Adrenal gland (tissue), 19 donors: ENCODE measurements at regions of chr15 and their contacts with region 1.

Region 1: GRCh38 chr15:99708556-99708955 is 24.7 kb downstream of the LYSMD4 start:
- DNase-seq: peak; percentile 64 to 93 (median 90)
- H3K4me3 ChIP-seq: peak overlapping the region in 1 of 4 donors; percentile 7
- H3K27ac ChIP-seq: peak overlapping the region in 3 of 5 donors; percentile 28 to 49 (median 43)
- H3K4me1 ChIP-seq: peaks cover 11 to 25% of the 10 kb centered on the region in 2 donors
- H3K27me3 ChIP-seq: no peaks in the 10 kb centered on the region
- CTCF ChIP-seq: no peak
- POLR2A ChIP-seq: peak in 1 of 2 donors; percentile 54

Region 2: DNA sequence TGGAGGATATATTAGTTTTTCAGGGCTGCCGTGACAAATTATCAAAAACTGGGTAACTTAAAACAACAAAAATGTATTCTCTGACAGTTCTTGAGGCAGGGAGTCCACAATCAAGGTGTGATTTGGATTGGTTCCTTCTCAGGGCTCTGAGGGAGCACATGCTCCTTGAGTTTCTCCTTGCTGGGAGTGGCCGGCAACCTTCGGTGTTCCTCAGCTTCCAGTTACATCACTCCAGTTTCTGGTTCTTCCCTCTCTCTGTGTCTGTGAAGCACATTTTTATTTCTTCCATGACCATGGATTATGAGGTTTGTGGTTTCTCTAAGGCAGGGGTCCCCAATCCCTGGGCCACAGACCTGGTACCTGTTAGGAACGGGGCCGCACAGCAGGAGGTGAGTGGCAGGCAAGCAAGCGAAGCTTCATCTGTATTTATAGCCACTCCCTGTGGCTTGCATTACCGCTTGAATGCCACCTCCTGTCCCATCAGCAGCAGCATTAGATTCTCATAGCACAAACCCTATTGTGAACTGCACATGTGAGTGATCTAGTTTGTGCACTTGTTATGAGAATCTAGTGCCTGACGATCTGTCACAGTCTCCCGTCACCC is 432.9 kb before region 1 on chr15:
- intact Hi-C with region 1: loop called in 1 of 2 experiments (anchors 5 kb)
- DNase-seq: no peak
- H3K4me3 ChIP-seq: no peak overlapping the region
- H3K27ac ChIP-seq: no peak overlapping the region
- H3K4me1 ChIP-seq: no peaks in the 10 kb centered on the region
- H3K27me3 ChIP-seq: no peaks in the 10 kb centered on the region
- CTCF ChIP-seq: no peak
- POLR2A ChIP-seq: no peak

Region 3: DNA sequence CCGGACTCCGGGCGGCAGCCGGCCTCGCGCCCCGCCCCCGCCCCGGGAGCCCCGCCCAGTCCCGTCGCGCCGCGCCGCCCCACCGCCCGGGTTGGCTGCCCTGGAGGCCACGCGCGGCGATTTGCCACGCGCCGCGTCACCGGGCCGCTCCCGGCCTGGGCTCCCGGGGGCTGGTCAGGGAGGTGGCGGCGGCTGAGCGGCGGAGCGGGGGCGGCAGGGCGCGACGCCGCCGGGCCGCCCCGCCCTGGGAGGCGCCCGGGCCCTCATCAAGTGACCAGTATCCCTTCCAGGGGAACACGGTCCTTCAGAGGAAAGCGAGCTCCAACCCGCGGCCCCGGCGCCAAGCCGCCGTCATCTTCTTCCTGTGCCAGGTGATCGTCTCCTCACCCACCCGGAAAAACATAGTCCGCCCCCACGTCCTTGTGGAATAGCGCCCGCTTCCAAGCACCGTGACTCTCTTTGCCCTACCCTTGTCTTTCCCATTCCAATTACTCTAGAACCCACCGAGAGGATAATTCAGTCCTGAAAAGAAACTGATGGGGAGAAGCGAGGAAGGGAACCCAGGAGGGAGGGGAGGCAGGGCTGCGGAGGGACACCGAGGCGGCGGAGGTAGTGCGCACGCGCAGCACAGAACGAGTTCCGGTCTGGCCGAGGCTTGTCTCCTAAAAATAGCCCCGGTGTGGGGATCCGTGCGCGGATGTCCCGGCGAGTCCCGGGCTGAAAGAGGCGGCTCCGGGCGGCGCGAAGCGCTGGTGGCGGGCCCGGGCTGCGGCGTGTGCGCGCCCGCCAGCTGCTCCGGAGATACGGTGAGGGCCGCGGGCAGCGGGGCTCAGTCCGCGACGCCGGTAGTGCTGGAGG is 143.0 kb before region 1 on chr15 and contains the start of gene MEF2A:
- intact Hi-C with region 1: loop called in 1 of 2 experiments (anchors 5 kb)
- DNase-seq: peak; percentile 95 to 98 (median 97)
- H3K4me3 ChIP-seq: peak within 1 kb of the TSS in 3 of 4 donors; percentile 73 to 95 (median 94)
- H3K27ac ChIP-seq: peak within 1 kb of the TSS; percentile 89 to 99 (median 96)
- H3K4me1 ChIP-seq: peaks cover 23 to 30% of the 10 kb centered on the region in 2 donors
- H3K27me3 ChIP-seq: no peaks in the 10 kb centered on the region
- CTCF ChIP-seq: no peak
- POLR2A ChIP-seq: peak; percentile 84 to 89
- total RNA-seq, gene MEF2A: 36.5 to 91.7 (median 53.8) TPM

Region 4: DNA sequence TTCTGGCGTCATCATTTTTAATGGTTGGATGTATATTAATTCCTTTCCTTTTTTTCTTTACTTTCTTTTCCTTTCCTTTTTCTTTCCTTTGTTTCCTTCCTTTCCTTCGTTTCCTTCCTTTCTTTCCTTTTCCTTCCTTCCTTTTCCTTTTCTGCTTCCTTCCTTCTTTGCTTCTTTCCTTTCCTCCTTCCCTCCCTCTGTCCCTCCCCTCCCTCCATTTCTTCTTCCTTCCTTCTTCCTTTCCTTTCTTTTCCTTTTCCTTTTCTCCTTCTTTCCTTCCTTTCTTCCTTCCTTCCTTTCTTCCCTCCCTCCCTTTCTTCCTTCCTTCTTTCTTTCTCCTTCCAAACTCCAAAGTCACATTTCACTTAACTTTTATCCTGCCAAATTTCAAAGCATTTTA is 79.6 kb after region 1 on chr15:
- intact Hi-C with region 1: no loop called
- DNase-seq: no peak
- H3K4me3 ChIP-seq: no peak overlapping the region
- H3K27ac ChIP-seq: no peak overlapping the region
- H3K4me1 ChIP-seq: no peaks in the 10 kb centered on the region
- H3K27me3 ChIP-seq: no peaks in the 10 kb centered on the region
- CTCF ChIP-seq: no peak
- POLR2A ChIP-seq: no peak